Heart right ventricle (tissue), 16 donors: ENCODE measurements at regions of chr18 and their contacts with region 1.

Region 1: DNA sequence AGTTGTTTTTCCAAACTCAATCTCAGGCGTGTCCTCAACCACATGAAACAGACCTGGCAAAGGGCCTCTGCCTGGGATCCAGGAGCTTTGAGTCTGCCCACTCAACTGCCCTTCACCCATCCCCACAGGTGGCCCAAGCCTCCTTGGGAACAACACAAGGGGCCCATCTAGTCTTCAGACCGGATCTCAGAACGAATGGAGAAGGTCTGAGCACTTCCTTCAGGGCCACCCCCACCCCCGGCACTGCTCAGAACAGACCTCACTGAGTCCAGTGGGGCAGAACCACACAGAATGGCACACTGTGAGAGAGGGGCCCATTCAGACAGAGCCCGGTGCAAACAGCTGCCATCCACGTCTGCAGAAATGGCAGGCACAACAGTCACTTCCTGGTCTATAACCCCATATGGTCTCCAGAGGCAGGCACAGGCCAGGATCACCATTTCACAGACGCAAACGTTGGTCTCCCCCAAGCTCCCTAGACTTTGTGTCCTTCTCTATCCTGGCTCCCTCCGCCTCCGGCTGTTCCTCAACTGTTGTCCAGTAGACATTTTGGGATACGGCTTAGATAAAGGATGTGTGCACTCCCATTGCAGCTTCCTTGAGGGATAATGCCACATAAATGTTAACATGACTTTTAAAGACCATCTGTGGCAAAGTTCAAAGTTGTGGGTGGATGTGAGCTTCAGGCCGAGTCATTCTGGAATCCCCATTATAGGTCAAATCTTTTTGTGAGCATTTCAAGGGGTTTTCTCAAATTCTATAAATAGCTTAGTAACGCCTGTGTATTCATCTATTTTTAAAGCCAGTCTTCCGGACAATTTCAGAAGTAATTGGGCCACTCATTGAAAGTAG is 149.7 kb downstream of the SMAD7 start:
- DNase-seq: no peak
- ATAC-seq: no peak
- H3K4me3 ChIP-seq: no peak overlapping the region
- H3K27ac ChIP-seq: peak overlapping the region in 9 of 10 donors; percentile 24 to 84 (median 76)
- H3K4me1 ChIP-seq: peaks cover 19 to 75% (median 51%) of the 10 kb centered on the region in 9 donors
- H3K27me3 ChIP-seq: no peaks in the 10 kb centered on the region
- CTCF ChIP-seq: no peak

Region 2: GRCh38 chr18:48868468-48869466 is 67.7 kb after region 1 on chr18:
- intact Hi-C with region 1: loop called in 1 of 10 experiments (anchors 10 kb)
- DNase-seq: no peak
- ATAC-seq: no peak
- H3K4me3 ChIP-seq: no peak overlapping the region
- H3K27ac ChIP-seq: no peak overlapping the region
- H3K4me1 ChIP-seq: peaks cover 0 to 27% (median 4%) of the 10 kb centered on the region in 9 donors
- H3K27me3 ChIP-seq: no peaks in the 10 kb centered on the region
- CTCF ChIP-seq: no peak